A549 (cell line): ENCODE measurements at regions of chr2 and their contacts with region 1.

Region 1: DNA sequence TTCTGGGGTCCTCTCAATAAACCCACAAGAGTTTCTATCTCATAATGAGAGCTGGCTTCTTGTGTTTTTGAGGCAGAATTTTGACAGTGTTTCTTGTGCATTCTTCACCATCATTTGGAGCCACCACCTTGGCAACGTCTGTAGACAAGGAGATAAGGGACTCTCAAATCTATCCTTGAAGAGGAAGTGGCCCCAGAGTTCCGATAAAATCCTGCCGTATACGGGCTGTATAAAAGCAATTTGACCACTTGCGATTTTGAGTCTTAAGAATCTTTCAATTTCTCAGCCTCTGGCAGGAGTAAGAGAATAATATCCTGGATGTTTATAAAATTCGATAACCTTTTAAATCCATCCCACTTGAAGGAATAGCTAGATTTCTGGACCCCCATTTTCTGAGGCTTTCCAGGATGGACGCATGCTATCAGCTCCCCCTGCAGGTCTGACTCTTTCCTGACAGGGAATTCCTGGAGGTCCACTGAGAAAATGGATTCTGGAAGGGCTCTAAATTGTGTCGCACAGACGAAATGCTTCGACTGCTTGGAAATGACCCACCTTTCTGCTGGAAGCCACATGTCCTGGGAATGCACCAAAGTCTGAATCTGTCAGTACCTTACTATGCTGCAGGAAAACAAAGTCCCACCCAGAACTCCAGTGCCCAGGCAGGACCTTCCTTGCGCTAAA is 54.1 kb downstream of the E2F6 start:
- DNase-seq: peak in 1 of 2 experiments; percentile 61
- ATAC-seq: peak; percentile 66 to 79; a peak in 4 of 6 replicates
- H3K4me3 ChIP-seq: peak overlapping the region; percentile 25; the same call in 2 of the 3 replicates
- H3K27ac ChIP-seq: peak overlapping the region; percentile 52 to 65
- H3K4me1 ChIP-seq: peaks cover 30% of the 10 kb centered on the region
- CTCF ChIP-seq: peak; percentile 96
- EP300 ChIP-seq: no peak
- POLR2A ChIP-seq: no peak
- RAD21 ChIP-seq: peak; percentile 96 to 97

Region 2: DNA sequence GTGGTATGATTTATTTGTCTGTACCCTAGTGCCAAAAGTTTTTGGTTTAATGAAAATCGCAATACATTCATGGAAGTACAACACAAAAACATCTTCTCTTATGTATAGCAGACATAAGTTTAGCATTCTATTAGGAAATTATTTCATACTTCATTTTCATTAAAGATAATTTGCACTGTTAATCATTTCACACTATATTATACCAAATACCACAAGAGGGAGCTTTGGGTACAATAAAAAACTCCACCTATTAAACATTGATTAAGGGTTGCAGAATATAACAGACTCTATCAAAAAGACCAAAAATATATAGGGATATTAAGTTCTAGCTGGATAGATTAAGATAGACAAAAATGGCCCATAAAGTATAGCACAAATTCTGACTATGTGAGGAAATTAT is 177.6 kb before region 1 on chr2:
- CTCF ChIA-PET with region 1: interaction called, 50 read pairs
- POLR2A ChIA-PET with region 1: no interaction called
- DNase-seq: no peak
- ATAC-seq: peak in 1 of 2 experiments; percentile 73; a peak in 2 of 6 replicates
- H3K4me3 ChIP-seq: no peak overlapping the region
- H3K27ac ChIP-seq: no peak overlapping the region
- H3K4me1 ChIP-seq: peaks cover 26% of the 10 kb centered on the region; the same call in 2 of the 3 replicates
- CTCF ChIP-seq: peak; percentile 82
- EP300 ChIP-seq: no peak
- POLR2A ChIP-seq: no peak
- RAD21 ChIP-seq: peak; percentile 80 to 91

Region 3: GRCh38 chr2:11344342-11344955 is 67.5 kb before region 1 on chr2 and contains the start of gene ROCK2:
- CTCF ChIA-PET with region 1: interaction called, 9 read pairs
- POLR2A ChIA-PET with region 1: interaction called, 10 read pairs
- DNase-seq: peak; percentile 79 to 91
- ATAC-seq: peak; percentile 71 to 72
- H3K4me3 ChIP-seq: peak within 1 kb of the TSS; percentile 92
- H3K27ac ChIP-seq: peak within 1 kb of the TSS; percentile 94 to 95
- H3K4me1 ChIP-seq: peaks cover 45% of the 10 kb centered on the region
- CTCF ChIP-seq: no peak
- EP300 ChIP-seq: no peak
- POLR2A ChIP-seq: peak; percentile 43
- RAD21 ChIP-seq: peak in 1 of 2 experiments; percentile 16; a peak in 1 of 5 replicates
- polyA plus RNA-seq, gene ROCK2: 33.4 and 38.7 TPM in 2 replicates

Region 4: GRCh38 chr2:11389551-11390528 is 22.1 kb before region 1 on chr2:
- CTCF ChIA-PET with region 1: interaction called, 30 read pairs
- POLR2A ChIA-PET with region 1: no interaction called
- DNase-seq: peak; percentile 98 to 99
- ATAC-seq: peak; percentile 82 to 86
- H3K4me3 ChIP-seq: no peak overlapping the region
- H3K27ac ChIP-seq: peak overlapping the region; percentile 86 to 92
- H3K4me1 ChIP-seq: peaks cover 89% of the 10 kb centered on the region
- CTCF ChIP-seq: no peak
- EP300 ChIP-seq: peak; percentile 94 to 97
- POLR2A ChIP-seq: no peak
- RAD21 ChIP-seq: peak; percentile 0 to 37; a peak in 3 of 5 replicates

Region 5: GRCh38 chr2:11446733-11447248 is 34.9 kb after region 1 on chr2:
- CTCF ChIA-PET with region 1: interaction called, 11 read pairs
- POLR2A ChIA-PET with region 1: no interaction called
- DNase-seq: peak; percentile 58 to 73
- ATAC-seq: peak; percentile 87 to 88
- H3K4me3 ChIP-seq: no peak overlapping the region
- H3K27ac ChIP-seq: no peak overlapping the region
- H3K4me1 ChIP-seq: no peaks in the 10 kb centered on the region
- CTCF ChIP-seq: peak; percentile 95
- EP300 ChIP-seq: no peak
- POLR2A ChIP-seq: no peak
- RAD21 ChIP-seq: peak; percentile 89 to 91